ENCODE measurements at regions of chr1 and their contacts with region 1.

Region 1: GRCh38 chr1:11012250-11013171 is at the start of gene TARDBP:
- DNase-seq: peak; percentile 85
- H3K4me3 Mint-ChIP-seq: peak within 1 kb of the TSS; percentile 77
- H3K27ac Mint-ChIP-seq: peak within 1 kb of the TSS; percentile 98
- H3K4me1 Mint-ChIP-seq: peaks cover 7% of the 10 kb centered on the region
- H3K27me3 Mint-ChIP-seq: no peaks in the 10 kb centered on the region
- CTCF ChIP-seq: no peak
- total RNA-seq, gene TARDBP: 124 and 130 TPM in 2 replicates

Region 2: DNA sequence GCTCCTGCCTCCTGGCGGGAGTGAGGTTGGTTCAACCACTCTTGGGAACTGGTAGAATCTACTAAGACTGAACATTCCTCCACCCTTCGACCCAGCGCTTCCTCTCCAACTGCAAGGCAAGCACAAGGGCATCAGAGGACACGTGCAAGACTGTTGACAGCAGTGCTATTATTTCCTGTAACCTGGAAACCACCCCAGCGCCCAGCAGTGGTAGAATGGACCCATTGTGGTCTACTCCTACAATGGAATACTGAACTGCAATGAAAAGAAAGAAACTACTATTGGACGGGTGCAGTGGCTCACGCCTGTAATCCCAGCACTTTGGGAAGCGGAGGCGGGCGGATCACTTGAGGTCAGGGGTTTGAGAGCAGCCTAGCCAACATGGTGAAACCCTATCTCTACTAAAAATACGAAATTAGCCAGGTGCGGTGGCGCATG is 33.0 kb before region 1 on chr1:
- CTCF ChIA-PET with region 1: interaction called, 4 read pairs
- intact Hi-C with region 1: loop called (anchors 1 kb)
- DNase-seq: peak; percentile 74
- H3K4me3 Mint-ChIP-seq: peak overlapping the region; percentile 46
- H3K27ac Mint-ChIP-seq: peak overlapping the region; percentile 80
- H3K4me1 Mint-ChIP-seq: peaks cover 29% of the 10 kb centered on the region
- H3K27me3 Mint-ChIP-seq: no peaks in the 10 kb centered on the region
- CTCF ChIP-seq: no peak

Measured in Calu3 (cell line).